Right lobe of liver (tissue), 6 donors: ENCODE measurements at regions of chr6 and their contacts with region 1.

Region 1: DNA sequence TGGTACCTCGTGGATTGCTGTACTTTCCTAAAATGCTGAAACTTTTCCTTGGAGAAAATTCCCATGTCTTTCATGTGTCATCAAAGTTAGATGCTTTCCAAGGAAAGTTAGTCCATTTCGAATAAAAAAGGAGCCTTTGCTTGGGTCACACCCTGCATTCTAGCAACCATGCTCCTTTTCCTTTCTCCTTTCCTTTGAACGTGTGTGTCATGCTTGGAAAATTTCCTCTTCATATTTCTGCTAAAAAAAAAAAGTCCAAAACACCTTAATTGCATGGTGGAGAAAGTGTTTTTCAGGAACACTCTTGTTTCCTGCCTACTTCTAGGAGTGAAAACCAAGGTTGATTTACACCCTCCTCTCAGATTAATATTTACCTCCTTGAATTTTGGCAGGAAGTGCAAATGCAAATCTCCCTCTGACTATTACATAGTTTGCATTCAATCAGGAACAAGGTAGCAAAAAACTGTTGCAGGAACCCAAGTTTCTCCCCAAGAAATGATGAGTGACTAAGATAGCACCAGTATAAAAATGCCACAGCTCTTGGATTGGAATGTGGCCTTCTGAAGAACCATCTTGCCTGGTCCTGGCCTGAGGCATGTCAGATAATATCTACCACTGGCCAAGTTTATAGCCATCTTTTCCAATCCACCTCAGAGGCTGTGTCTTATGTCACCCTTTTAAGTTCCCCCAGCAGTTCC is 590.6 kb downstream of the QKI start:
- DNase-seq: no peak
- ATAC-seq: no peak
- H3K4me3 ChIP-seq: no peak overlapping the region
- H3K27ac ChIP-seq: no peak overlapping the region
- H3K4me1 ChIP-seq: no peaks in the 10 kb centered on the region
- H3K27me3 ChIP-seq: no peaks in the 10 kb centered on the region
- CTCF ChIP-seq: no peak
- POLR2A ChIP-seq: no peak

Region 2: GRCh38 chr6:163814494-163815364 is 190.4 kb before region 1 on chr6:
- intact Hi-C with region 1: no loop called
- DNase-seq: no peak
- ATAC-seq: no peak
- H3K4me3 ChIP-seq: no peak overlapping the region
- H3K27ac ChIP-seq: no peak overlapping the region
- H3K4me1 ChIP-seq: no peaks in the 10 kb centered on the region
- H3K27me3 ChIP-seq: no peaks in the 10 kb centered on the region
- CTCF ChIP-seq: no peak
- POLR2A ChIP-seq: no peak

Region 3: GRCh38 chr6:163842467-163842866 is 162.7 kb before region 1 on chr6:
- intact Hi-C with region 1: no loop called
- DNase-seq: no peak
- ATAC-seq: no peak
- H3K4me3 ChIP-seq: no peak overlapping the region
- H3K27ac ChIP-seq: no peak overlapping the region
- H3K4me1 ChIP-seq: no peaks in the 10 kb centered on the region
- H3K27me3 ChIP-seq: no peaks in the 10 kb centered on the region
- CTCF ChIP-seq: no peak
- POLR2A ChIP-seq: no peak

Region 4: GRCh38 chr6:164303102-164303964 is 298.2 kb after region 1 on chr6:
- intact Hi-C with region 1: loop called in 1 of 2 experiments (anchors 5 kb)
- DNase-seq: no peak
- ATAC-seq: peak in 2 of 4 donors; percentile 70 to 77
- H3K4me3 ChIP-seq: no peak overlapping the region
- H3K27ac ChIP-seq: no peak overlapping the region
- H3K4me1 ChIP-seq: no peaks in the 10 kb centered on the region
- H3K27me3 ChIP-seq: no peaks in the 10 kb centered on the region
- CTCF ChIP-seq: no peak
- POLR2A ChIP-seq: no peak